Dorsolateral prefrontal cortex (tissue), 120 donors: ENCODE measurements at regions of chr12 and their contacts with region 1.

Region 1: GRCh38 chr12:71754461-71755145 is at the start of gene RAB21:
- DNase-seq: peak; percentile 95 to 99 (median 98)
- H3K4me3 ChIP-seq: peak within 1 kb of the TSS; percentile 58 to 98 (median 89)
- H3K27ac ChIP-seq: peak within 1 kb of the TSS; percentile 6 to 98 (median 89)
- H3K27me3 ChIP-seq: no peaks in the 10 kb centered on the region
- CTCF ChIP-seq: peak in 55 of 56 donors; percentile 11 to 70 (median 50)
- total RNA-seq, gene RAB21: 57.7 to 116 (median 79.5) TPM

Region 2: DNA sequence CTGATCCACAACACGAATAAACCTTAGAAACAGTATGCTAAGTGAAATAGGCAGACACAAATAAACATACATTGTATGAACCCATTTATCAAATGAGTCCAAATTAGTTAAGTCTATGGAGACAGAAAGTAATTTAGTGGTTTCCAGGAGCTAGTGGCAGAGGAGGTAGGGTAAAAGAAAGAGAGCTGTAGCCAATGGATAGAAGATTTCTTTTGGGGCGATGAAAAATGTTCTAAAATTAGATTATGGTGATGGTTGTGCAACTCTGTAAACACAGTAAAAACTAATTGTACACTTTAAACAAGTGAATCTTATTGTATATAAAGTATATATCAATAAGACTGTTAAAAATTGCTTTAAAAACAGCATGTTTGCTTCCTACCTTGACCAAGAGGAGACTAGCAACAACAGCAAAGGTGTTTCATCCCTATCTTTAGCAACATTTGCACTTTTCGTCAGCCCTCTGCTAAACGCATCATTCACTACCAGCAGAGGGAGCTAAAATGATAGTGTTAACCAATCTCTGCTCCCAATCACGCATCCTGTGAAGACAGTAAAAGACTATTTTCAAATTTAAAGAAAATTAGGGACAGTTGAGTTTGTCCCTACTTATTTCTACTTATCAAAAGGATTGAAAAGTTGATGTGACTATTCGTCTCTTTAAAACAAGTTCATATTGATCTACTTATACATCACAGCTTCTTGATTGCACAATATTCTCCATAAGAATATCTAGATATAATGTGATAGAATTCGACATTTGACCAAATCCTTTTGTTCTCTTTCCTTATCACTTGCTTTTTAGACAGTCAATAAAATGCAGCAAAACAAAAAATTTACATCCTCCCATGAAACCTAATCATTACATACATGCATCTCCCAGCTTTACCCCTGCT is 339.0 kb before region 1 on chr12:
- intact Hi-C with region 1: loop called (anchors 5 to 10 kb)
- DNase-seq: peak in 1 of 10 donors; percentile 17
- H3K4me3 ChIP-seq: no peak overlapping the region
- H3K27ac ChIP-seq: no peak overlapping the region
- H3K27me3 ChIP-seq: peaks cover 0 to 3% (median 0%) of the 10 kb centered on the region in 45 donors
- CTCF ChIP-seq: peak; percentile 60 to 98 (median 85)

Region 3: GRCh38 chr12:71663561-71664294 is 90.9 kb before region 1 on chr12 and contains the start of gene ZFC3H1:
- intact Hi-C with region 1: loop called (anchors 5 to 10 kb)
- DNase-seq: peak; percentile 94 to 99 (median 98)
- H3K4me3 ChIP-seq: peak within 1 kb of the TSS; percentile 59 to 99 (median 92)
- H3K27ac ChIP-seq: peak within 1 kb of the TSS; percentile 92 to 100 (median 98)
- H3K27me3 ChIP-seq: no peaks in the 10 kb centered on the region
- CTCF ChIP-seq: peak in 50 of 56 donors; percentile 25 to 75 (median 49)
- total RNA-seq, gene ZFC3H1: 49.7 to 102 (median 66.9) TPM

Region 4: GRCh38 chr12:71840231-71840847 is 85.7 kb after region 1 on chr12:
- intact Hi-C with region 1: loop called (anchors 10 kb)
- DNase-seq: peak in 1 of 10 donors; percentile 5
- H3K4me3 ChIP-seq: peak overlapping the region; percentile 55 to 97 (median 82)
- H3K27ac ChIP-seq: peak overlapping the region; percentile 64 to 98 (median 92)
- H3K27me3 ChIP-seq: no peaks in the 10 kb centered on the region
- CTCF ChIP-seq: peak in 1 of 56 donors; percentile 6

Region 5: GRCh38 chr12:72734581-72734980 is 980.0 kb after region 1 on chr12:
- intact Hi-C with region 1: no loop called
- DNase-seq: no peak
- H3K4me3 ChIP-seq: no peak overlapping the region
- H3K27ac ChIP-seq: no peak overlapping the region
- H3K27me3 ChIP-seq: peaks cover 0 to 4% (median 0%) of the 10 kb centered on the region in 45 donors
- CTCF ChIP-seq: no peak